ENCODE measurements at regions of chr12 and their contacts with region 1.

Region 1: GRCh38 chr12:116559162-116559935 is at the start of gene MAP1LC3B2:
- DNase-seq: peak; percentile 86
- H3K4me3 Mint-ChIP-seq: peak within 1 kb of the TSS; percentile 51
- H3K27ac Mint-ChIP-seq: peak within 1 kb of the TSS; percentile 95
- H3K4me1 Mint-ChIP-seq: peaks cover 42% of the 10 kb centered on the region
- H3K27me3 Mint-ChIP-seq: no peaks in the 10 kb centered on the region
- total RNA-seq, gene MAP1LC3B2: 0.37 and 0.60 TPM in 2 replicates

Region 2: DNA sequence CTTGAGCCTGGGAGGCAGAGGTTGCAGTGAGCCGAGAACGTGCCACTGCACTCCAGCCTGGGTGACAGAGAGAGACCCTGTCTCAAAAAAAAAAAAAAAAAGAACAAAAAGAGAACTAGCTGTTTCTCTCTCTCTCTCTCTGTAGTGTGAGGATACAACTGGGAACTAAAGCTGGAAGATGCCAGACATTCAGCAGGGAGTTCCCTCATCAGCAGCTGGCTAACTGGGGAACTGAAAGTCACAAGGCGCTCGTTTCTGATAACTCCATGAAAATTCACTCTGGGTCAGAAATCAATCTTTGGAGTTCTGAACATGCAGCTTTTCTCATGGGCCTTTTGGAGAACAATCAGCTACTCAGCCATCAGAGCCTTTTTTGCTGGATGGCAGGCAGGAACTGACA is 43.7 kb before region 1 on chr12:
- intact Hi-C with region 1: no loop called
- DNase-seq: no peak
- H3K4me3 Mint-ChIP-seq: no peak overlapping the region
- H3K27ac Mint-ChIP-seq: no peak overlapping the region
- H3K4me1 Mint-ChIP-seq: peaks cover 2% of the 10 kb centered on the region
- H3K27me3 Mint-ChIP-seq: peaks cover 11% of the 10 kb centered on the region

Region 3: DNA sequence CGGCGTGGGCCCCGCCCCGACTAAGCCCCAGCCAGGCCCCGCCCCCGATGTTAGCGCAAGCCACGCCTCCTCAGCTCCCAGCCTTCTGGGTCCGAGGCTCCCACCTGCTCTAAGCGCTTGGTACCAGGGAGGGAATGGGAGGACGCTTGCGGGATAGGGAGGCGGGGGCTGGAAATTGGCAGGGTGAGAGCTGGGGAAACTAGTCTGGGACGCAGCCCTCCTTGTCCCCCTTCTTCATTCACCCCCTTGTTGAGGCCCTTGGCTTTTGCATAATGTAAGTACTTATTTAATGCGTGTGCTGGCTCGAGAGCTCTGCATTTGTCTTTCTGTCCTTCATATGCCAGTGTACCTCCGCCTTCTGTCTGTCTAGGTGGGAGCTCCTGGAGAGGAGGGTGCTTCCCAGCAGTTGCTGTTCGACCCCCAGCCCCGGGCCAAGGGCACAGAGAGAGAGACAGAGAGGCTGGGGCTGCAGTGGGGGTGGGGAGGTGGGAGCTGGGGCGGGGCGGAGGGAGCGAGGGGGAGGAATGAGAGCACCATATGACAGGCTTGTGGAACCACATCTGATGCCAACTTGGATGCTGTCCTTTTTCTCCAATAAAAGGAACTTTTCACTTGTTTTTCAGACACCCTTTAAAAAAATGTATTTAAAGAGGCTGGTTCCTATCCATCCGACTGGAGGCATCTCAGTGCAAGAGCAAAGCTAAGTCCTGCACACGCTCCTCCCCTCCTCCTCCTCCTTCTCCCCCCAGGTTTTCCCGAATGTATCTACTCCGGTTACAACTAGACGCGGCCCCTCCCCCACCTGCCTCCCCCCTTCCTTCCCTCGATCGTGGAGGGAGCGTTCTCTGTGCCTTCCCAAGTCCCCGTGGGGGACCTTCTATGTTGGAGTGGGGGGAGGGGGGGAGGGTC is 25.8 kb before region 1 on chr12:
- intact Hi-C with region 1: loop called (anchors 1 kb)
- DNase-seq: peak; percentile 61
- H3K4me3 Mint-ChIP-seq: peak overlapping the region; percentile 82
- H3K27ac Mint-ChIP-seq: no peak overlapping the region
- H3K4me1 Mint-ChIP-seq: peaks cover 31% of the 10 kb centered on the region
- H3K27me3 Mint-ChIP-seq: peaks cover 4% of the 10 kb centered on the region

Region 4: DNA sequence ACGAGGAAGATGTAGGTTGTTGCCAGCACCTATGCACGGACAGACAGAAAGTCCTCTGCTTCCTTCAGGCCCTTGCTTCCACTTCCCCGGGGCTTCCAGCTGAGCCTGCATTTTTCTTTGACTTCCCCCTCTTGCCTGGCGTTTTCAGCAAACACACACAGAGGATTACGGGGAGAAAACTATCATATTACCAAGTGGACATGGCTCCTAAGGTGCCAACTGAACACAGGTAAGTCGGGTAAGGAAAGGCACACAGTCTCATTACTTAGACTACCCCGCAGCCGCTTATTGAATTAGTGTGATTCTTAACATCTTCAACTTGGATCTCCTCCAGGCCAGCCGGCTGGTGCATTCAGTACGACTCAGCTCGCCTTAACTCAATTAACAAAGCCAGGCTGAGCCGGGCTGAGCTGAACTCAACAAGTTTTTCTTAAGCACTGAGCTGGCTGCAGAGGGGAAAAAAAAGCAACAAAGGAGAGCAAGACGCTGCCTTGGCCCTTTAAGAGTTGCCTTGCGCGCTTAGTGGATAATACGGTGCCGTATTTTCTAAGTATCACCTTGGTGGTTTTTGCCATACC is 19.4 kb before region 1 on chr12:
- intact Hi-C with region 1: loop called (anchors 1 kb)
- DNase-seq: no peak
- H3K4me3 Mint-ChIP-seq: no peak overlapping the region
- H3K27ac Mint-ChIP-seq: no peak overlapping the region
- H3K4me1 Mint-ChIP-seq: peaks cover 33% of the 10 kb centered on the region
- H3K27me3 Mint-ChIP-seq: no peaks in the 10 kb centered on the region

Measured in activated T-helper 2 cell treated with anti-CD3 and anti-CD28 coated beads, Interferon-gamma antibody, Interleukin-2, Interleukin-4, amounts not matched to agents 10 μg/mL and 5 μg/mL and 100 μg/mL, durations not matched to agents 14 hours and 24 hours and 36 hours (primary cell).